GM12878 (cell line): ENCODE measurements at regions of chr13 and their contacts with region 1.

Region 1: DNA sequence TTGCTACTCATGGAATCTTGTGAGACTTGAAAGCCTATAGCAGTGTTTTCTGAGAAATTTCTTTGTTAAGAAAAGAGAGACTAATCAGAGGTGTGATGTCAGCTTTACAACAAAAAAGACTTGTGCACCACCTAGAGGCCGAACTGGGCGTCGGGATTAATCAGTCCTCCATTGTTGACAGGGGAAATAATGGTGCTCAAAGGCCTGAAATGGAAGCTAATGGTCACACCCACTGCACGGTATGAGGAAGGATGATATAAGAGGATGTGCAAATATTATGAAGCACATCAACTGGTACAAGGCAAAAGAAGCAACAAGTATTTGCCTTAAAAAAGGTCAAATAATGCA is 480.2 kb upstream of the MIR17HG start:
- DNase-seq: peak; percentile 24
- ATAC-seq: peak; percentile 100
- H3K4me3 ChIP-seq: no peak overlapping the region
- H3K27ac ChIP-seq: no peak overlapping the region
- H3K4me1 ChIP-seq: no peaks in the 10 kb centered on the region
- H3K27me3 ChIP-seq: no peaks in the 10 kb centered on the region
- CTCF ChIP-seq: peak; percentile 52 to 67 (median 65)
- EP300 ChIP-seq: no peak
- POLR2A ChIP-seq: no peak
- RAD21 ChIP-seq: peak; percentile 77

Region 2: DNA sequence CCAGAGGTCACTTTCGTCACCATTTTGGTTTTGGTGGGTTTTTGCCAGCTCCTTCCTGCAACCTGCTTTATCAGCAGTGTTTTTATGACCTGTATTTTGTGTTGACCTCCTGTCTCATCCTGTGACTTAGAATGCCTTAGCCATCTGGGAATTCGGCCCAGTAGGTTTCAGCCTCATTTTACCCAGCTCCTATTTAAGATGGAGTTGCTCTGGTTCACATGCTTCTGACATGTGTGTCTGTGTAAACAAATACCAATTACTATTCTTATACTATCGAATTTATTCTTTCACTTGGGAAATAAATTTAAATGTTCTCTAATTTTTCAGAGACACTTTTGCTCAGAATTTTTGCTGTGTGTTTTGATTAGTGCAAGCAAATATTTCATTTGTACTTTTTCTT is 890.1 kb before region 1 on chr13:
- CTCF ChIA-PET with region 1: no interaction called
- POLR2A ChIA-PET with region 1: no interaction called
- RAD21 ChIA-PET with region 1: no interaction called
- SMC1A ChIA-PET with region 1: no interaction called
- in situ Hi-C with region 1: no loop called
- intact Hi-C with region 1: loop called (anchors 10 kb)
- DNase-seq: no peak
- ATAC-seq: no peak
- H3K4me3 ChIP-seq: no peak overlapping the region
- H3K27ac ChIP-seq: no peak overlapping the region
- H3K4me1 ChIP-seq: no peaks in the 10 kb centered on the region
- H3K27me3 ChIP-seq: no peaks in the 10 kb centered on the region
- CTCF ChIP-seq: no peak
- EP300 ChIP-seq: no peak
- POLR2A ChIP-seq: no peak
- RAD21 ChIP-seq: no peak

Region 3: DNA sequence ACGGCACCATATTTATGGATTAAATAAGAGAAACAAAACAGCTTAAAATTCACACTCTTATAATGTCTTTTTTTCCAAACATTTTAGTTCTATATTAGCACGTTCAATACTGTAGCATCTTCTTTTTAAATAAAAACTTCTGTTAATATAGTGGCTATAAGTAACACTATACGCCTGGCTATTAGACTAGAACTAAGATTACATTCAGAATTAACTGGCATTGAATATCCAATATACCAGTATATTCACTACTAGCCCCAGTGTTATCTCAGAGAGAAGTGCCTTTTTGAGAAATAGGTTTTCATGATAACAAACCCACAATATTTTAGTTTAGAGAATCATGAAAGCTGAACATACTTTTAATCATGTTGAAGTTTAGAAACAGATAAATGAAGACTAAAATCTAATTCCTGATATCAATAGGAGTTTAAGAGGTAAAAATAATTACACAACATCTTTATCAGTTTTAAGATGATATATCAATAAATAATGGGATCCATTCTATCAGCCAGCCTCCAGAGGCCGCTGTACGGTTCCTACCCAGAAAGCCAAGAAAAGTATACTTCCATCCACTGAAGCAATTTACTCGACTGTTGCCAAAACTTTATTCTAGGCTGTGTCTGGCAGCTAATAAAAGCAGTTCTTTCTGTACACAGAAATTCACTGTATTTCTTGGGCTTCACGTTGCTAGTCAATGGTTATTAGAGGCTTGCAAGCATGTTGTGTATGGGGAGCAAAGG is 633.2 kb before region 1 on chr13:
- CTCF ChIA-PET with region 1: interaction called, 3 read pairs
- POLR2A ChIA-PET with region 1: no interaction called
- RAD21 ChIA-PET with region 1: no interaction called
- SMC1A ChIA-PET with region 1: no interaction called
- in situ Hi-C with region 1: no loop called
- intact Hi-C with region 1: loop called (anchors 5 kb)
- DNase-seq: no peak
- ATAC-seq: peak; percentile 40; the same call in 1 of the 3 replicates
- H3K4me3 ChIP-seq: no peak overlapping the region
- H3K27ac ChIP-seq: no peak overlapping the region
- H3K4me1 ChIP-seq: no peaks in the 10 kb centered on the region
- H3K27me3 ChIP-seq: no peaks in the 10 kb centered on the region
- CTCF ChIP-seq: no peak
- EP300 ChIP-seq: no peak
- POLR2A ChIP-seq: no peak
- RAD21 ChIP-seq: no peak

Region 4: DNA sequence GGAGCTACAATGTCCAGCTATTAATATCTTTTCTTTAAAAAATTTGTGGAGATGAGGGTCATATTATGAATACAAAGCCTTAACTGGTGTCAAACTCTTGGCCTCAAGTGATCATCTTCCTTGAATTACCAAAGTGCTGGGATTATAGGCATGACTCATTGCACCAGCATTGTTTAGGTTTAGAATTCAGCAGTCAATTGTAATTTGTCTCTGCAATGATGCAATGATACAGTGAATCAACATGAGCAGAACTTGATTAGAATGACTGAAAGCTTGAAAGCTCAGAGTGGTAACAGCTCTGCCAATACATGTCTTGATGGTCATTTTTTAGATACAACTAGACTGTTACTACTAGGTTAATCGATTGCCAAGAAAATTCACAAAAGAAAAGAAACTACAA is 272.6 kb before region 1 on chr13:
- CTCF ChIA-PET with region 1: no interaction called
- POLR2A ChIA-PET with region 1: no interaction called
- RAD21 ChIA-PET with region 1: no interaction called
- SMC1A ChIA-PET with region 1: no interaction called
- in situ Hi-C with region 1: no loop called
- intact Hi-C with region 1: no loop called
- DNase-seq: no peak
- ATAC-seq: no peak
- H3K4me3 ChIP-seq: no peak overlapping the region
- H3K27ac ChIP-seq: no peak overlapping the region
- H3K4me1 ChIP-seq: no peaks in the 10 kb centered on the region
- H3K27me3 ChIP-seq: no peaks in the 10 kb centered on the region
- CTCF ChIP-seq: no peak
- EP300 ChIP-seq: no peak
- POLR2A ChIP-seq: no peak
- RAD21 ChIP-seq: no peak

Region 5: GRCh38 chr13:90855513-90855912 is 11.8 kb before region 1 on chr13:
- CTCF ChIA-PET with region 1: interaction called, 23 read pairs
- POLR2A ChIA-PET with region 1: no interaction called
- RAD21 ChIA-PET with region 1: interaction called, 3 read pairs
- SMC1A ChIA-PET with region 1: no interaction called
- in situ Hi-C with region 1: no loop called
- intact Hi-C with region 1: no loop called
- DNase-seq: no peak
- ATAC-seq: no peak
- H3K4me3 ChIP-seq: no peak overlapping the region
- H3K27ac ChIP-seq: no peak overlapping the region
- H3K4me1 ChIP-seq: no peaks in the 10 kb centered on the region
- H3K27me3 ChIP-seq: no peaks in the 10 kb centered on the region
- CTCF ChIP-seq: no peak
- EP300 ChIP-seq: no peak
- POLR2A ChIP-seq: no peak
- RAD21 ChIP-seq: no peak